Common myeloid progenitor, CD34-positive (primary cell): ENCODE measurements at regions of chr12 and their contacts with region 1.

Region 1: GRCh38 chr12:123614531-123614930 is 12.6 kb downstream of the DDX55 start:
- DNase-seq: no peak
- H3K4me3 ChIP-seq: no peak overlapping the region
- H3K27ac ChIP-seq: no peak overlapping the region
- H3K4me1 ChIP-seq: no peaks in the 10 kb centered on the region
- H3K27me3 ChIP-seq: no peaks in the 10 kb centered on the region

Region 2: GRCh38 chr12:123633379-123634141 is 19.0 kb after region 1 on chr12 and contains the starts of genes EIF2B1 and GTF2H3:
- CTCF ChIA-PET with region 1: interaction called, 10 read pairs
- POLR2A ChIA-PET with region 1: no interaction called
- DNase-seq: peak; percentile 98
- H3K4me3 ChIP-seq: peak within 1 kb of the TSS; percentile 76 to 99 (median 94)
- H3K27ac ChIP-seq: peak within 1 kb of the TSS; percentile 94 to 95
- H3K4me1 ChIP-seq: peaks cover 12 to 19% (median 14%) of the 10 kb centered on the region in 4 experiments
- H3K27me3 ChIP-seq: no peaks in the 10 kb centered on the region